ENCODE measurements at regions of chr5 and their contacts with region 1.

Region 1: GRCh38 chr5:43066799-43067741 is 27.0 kb upstream of the ANXA2R start:
- DNase-seq: peak; percentile 74
- ATAC-seq: peak; percentile 58
- H3K4me3 ChIP-seq: peak overlapping the region; percentile 91
- H3K27ac ChIP-seq: peak overlapping the region; percentile 100
- H3K4me1 ChIP-seq: peaks cover 10% of the 10 kb centered on the region
- H3K27me3 ChIP-seq: no peaks in the 10 kb centered on the region
- CTCF ChIP-seq: no peak
- EP300 ChIP-seq: peak in 1 of 2 experiments; percentile 100; a peak in 2 of 4 replicates
- POLR2A ChIP-seq: peak; percentile 47; the same call in 1 of the 2 replicates
- RAD21 ChIP-seq: no peak

Region 2: GRCh38 chr5:42950440-42951292 is 116.4 kb before region 1 on chr5:
- CTCF ChIA-PET with region 1: no interaction called
- POLR2A ChIA-PET with region 1: no interaction called
- RAD21 ChIA-PET with region 1: no interaction called
- SMC1A ChIA-PET with region 1: interaction called, 3 read pairs
- in situ Hi-C with region 1: no loop called
- intact Hi-C with region 1: loop called (anchors 2 kb)
- DNase-seq: peak; percentile 32
- ATAC-seq: peak; percentile 48
- H3K4me3 ChIP-seq: peak overlapping the region; percentile 62
- H3K27ac ChIP-seq: peak overlapping the region; percentile 51
- H3K4me1 ChIP-seq: peaks cover 13% of the 10 kb centered on the region
- H3K27me3 ChIP-seq: no peaks in the 10 kb centered on the region; a peak in 1 of 4 replicates
- CTCF ChIP-seq: no peak
- EP300 ChIP-seq: no peak
- POLR2A ChIP-seq: no peak; the same call in 1 of the 2 replicates
- RAD21 ChIP-seq: no peak

Region 3: DNA sequence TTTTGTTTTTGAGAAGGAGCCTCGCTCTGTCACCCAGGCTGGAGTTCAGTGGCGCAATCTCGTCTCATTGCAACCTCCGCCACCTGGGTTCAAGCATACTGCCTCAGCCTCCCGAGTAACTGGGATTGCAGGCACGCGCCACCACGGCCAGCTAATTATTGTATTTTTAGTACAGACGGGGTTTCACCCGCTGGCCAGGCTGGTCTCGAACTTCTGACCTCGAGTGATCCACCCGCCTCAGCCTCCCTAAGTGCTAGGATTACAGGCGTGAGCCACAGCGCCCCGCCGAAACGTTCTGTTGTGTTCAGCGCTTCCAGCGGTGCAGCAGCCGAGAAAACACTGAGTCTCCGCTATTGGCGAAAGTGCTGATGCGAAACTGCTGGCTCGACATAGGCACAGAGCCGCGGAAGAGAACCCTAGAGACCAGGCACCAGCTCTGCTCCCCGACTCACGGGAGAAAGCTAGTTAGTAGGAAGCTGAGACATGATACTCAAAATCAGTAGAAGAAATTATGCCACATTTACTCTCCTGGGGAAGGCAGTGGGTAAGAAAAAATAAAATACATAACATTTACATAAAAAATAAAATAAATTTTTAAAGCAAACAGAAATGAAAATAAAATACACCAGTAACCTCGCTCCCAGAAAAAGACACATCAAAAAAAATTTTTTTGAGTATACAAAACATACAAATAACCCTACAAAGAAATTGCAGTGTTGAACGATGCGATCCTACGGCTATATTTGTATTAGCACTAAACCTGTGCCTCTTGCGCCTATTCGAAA is 58.5 kb before region 1 on chr5:
- CTCF ChIA-PET with region 1: interaction called, 4 read pairs
- POLR2A ChIA-PET with region 1: interaction called, 4 read pairs
- RAD21 ChIA-PET with region 1: interaction called, 3 read pairs
- SMC1A ChIA-PET with region 1: interaction called, 5 read pairs
- in situ Hi-C with region 1: no loop called
- intact Hi-C with region 1: loop called (anchors 1 kb)
- DNase-seq: no peak
- ATAC-seq: peak; percentile 72
- H3K4me3 ChIP-seq: peak overlapping the region; percentile 67
- H3K27ac ChIP-seq: peak overlapping the region; percentile 94
- H3K4me1 ChIP-seq: peaks cover 13% of the 10 kb centered on the region
- H3K27me3 ChIP-seq: no peaks in the 10 kb centered on the region
- CTCF ChIP-seq: peak in 2 of 3 experiments; percentile 5 to 13; a peak in 2 of 6 replicates
- EP300 ChIP-seq: peak in 1 of 2 experiments; percentile 77; a peak in 2 of 4 replicates
- POLR2A ChIP-seq: no peak
- RAD21 ChIP-seq: no peak

Region 4: DNA sequence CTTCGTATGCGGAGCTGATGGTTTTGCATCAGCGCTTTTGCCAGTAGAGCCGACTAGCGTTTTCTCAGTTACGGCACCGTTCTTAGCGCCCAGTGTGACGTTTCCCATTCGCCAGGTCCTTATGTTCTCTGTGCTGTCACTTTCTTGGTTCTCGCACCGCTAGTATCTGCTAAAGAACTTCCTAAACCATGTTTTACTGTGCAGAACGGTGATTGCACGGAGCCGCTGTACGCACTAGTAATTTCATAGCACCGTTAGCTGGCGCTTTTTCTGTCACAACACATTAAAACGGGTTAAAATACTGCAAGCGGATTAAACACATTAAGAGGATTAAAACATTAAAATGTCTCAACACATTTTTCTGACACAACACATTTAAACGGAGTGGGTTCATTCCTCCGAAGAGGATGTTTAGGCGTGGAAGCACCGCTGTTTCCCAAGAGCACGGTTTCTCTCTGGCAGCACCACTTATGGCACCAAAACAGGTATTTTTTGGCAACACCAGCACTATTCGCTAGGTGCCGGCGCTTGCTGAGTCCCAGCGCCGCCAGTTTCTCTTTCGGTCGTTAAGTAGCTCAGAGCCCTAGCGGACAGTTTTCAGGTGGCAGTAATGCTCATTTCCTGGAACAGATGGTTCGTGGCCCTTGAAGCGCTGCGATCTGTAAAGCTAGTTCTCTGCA is 47.3 kb before region 1 on chr5:
- CTCF ChIA-PET with region 1: interaction called, 9 read pairs
- POLR2A ChIA-PET with region 1: interaction called, 6 read pairs
- RAD21 ChIA-PET with region 1: interaction called, 3 read pairs
- SMC1A ChIA-PET with region 1: interaction called, 8 read pairs
- in situ Hi-C with region 1: no loop called
- intact Hi-C with region 1: loop called (anchors 2 kb)
- DNase-seq: no peak
- ATAC-seq: peak; percentile 78
- H3K4me3 ChIP-seq: peak overlapping the region; percentile 83
- H3K27ac ChIP-seq: peak overlapping the region; percentile 94
- H3K4me1 ChIP-seq: peaks cover 16% of the 10 kb centered on the region
- H3K27me3 ChIP-seq: no peaks in the 10 kb centered on the region
- CTCF ChIP-seq: peak; percentile 42 to 73 (median 59)
- EP300 ChIP-seq: no peak
- POLR2A ChIP-seq: peak; percentile 57
- RAD21 ChIP-seq: peak; percentile 40; the same call in 1 of the 2 replicates

Region 5: DNA sequence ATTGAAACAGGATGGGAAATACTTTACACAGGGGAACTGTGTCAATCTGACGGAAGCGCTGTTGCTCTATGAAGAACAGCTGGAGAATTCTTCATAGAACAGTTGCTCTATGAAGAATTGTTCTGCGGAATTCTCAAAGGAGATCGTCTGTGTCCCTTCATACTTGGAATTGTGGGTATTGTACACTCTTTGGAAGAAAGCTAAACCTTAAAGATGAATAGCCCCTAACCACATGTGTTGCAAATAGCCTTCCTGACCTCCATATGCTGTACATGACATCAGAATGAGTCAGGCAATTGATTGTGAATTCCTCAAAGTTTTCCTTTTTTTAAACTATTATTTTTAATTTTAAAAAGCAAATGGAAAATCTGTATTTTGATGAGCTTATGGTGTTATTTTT is 140.5 kb after region 1 on chr5:
- CTCF ChIA-PET with region 1: no interaction called
- POLR2A ChIA-PET with region 1: no interaction called
- RAD21 ChIA-PET with region 1: no interaction called
- SMC1A ChIA-PET with region 1: no interaction called
- in situ Hi-C with region 1: no loop called
- intact Hi-C with region 1: no loop called
- DNase-seq: no peak
- ATAC-seq: no peak
- H3K4me3 ChIP-seq: no peak overlapping the region
- H3K27ac ChIP-seq: no peak overlapping the region
- H3K4me1 ChIP-seq: peaks cover under 1% of the 10 kb centered on the region; the same call in 1 of the 2 replicates
- H3K27me3 ChIP-seq: no peaks in the 10 kb centered on the region
- CTCF ChIP-seq: no peak
- EP300 ChIP-seq: no peak
- POLR2A ChIP-seq: no peak
- RAD21 ChIP-seq: no peak

Region 6: GRCh38 chr5:43313035-43313853 is 246.2 kb after region 1 on chr5 and contains the start of gene HMGCS1:
- CTCF ChIA-PET with region 1: interaction called, 4 read pairs
- POLR2A ChIA-PET with region 1: interaction called, 5 read pairs
- RAD21 ChIA-PET with region 1: no interaction called
- SMC1A ChIA-PET with region 1: no interaction called
- in situ Hi-C with region 1: no loop called
- intact Hi-C with region 1: loop called (anchors 2 kb)
- DNase-seq: peak; percentile 100
- ATAC-seq: peak; percentile 92
- H3K4me3 ChIP-seq: peak within 1 kb of the TSS; percentile 79
- H3K27ac ChIP-seq: peak within 1 kb of the TSS; percentile 84
- H3K4me1 ChIP-seq: peaks cover 6% of the 10 kb centered on the region
- H3K27me3 ChIP-seq: no peaks in the 10 kb centered on the region
- CTCF ChIP-seq: peak in 2 of 3 experiments; percentile 6 to 16; a peak in 1 of 6 replicates
- EP300 ChIP-seq: peak in 1 of 2 experiments; percentile 60; a peak in 1 of 4 replicates
- POLR2A ChIP-seq: peak; percentile 99
- RAD21 ChIP-seq: peak; percentile 23; the same call in 1 of the 2 replicates
- polyA plus RNA-seq, gene HMGCS1: 74.9 to 94.1 TPM

Measured in GM12878 (cell line).